Activated naive CD4-positive, alpha-beta T cell treated with anti-CD3 and anti-CD28 coated beads for 36 hours (primary cell): ENCODE measurements at regions of chr1 and their contacts with region 1.

Region 1: GRCh38 chr1:247390116-247390791 is 25.7 kb upstream of the NLRP3 start:
- DNase-seq: peak; percentile 91
- H3K4me3 Mint-ChIP-seq: no peak overlapping the region
- H3K27ac Mint-ChIP-seq: no peak overlapping the region
- H3K4me1 Mint-ChIP-seq: peaks cover 17% of the 10 kb centered on the region
- H3K27me3 Mint-ChIP-seq: peaks cover 7% of the 10 kb centered on the region

Region 2: DNA sequence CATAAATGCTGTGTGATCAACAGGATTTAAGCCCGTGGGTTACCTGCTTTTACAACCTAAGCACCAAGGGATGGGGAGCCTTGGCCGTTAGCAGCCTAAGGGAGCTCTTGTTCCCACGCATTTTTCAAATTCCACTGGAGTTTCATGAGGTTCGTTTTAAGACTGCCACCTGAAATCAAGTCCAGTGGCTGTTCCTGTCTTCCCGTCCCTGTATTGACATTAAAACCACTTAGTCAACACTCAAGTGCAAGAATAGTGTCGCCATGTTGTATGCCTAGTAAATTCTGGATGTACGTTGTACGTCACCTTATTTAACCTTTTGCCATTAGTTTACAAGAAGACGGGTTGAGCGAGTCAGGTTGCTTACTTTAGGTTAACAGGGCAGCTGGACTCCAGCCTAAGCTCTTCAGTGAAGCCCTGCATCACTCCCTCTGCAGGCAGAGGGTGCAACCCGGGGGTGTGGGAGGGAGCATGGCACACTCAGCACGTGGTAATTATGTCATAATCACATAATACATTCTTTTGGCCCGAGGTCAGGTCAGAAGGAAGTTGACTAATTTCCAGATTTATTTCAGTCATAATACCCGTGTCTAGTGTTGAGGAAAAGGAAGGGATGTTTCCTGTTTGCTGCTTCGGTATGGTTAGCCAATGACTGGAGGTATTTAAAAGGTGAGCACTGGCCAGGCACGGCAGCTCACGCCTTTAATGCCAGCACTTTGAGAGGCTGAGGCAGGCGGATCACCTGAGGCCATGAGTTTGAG is 781.5 kb before region 1 on chr1:
- CTCF ChIA-PET with region 1: no interaction called
- intact Hi-C with region 1: no loop called
- DNase-seq: peak; percentile 49
- H3K4me3 Mint-ChIP-seq: no peak overlapping the region
- H3K27ac Mint-ChIP-seq: peak overlapping the region; percentile 33
- H3K4me1 Mint-ChIP-seq: peaks cover 51% of the 10 kb centered on the region
- H3K27me3 Mint-ChIP-seq: no peaks in the 10 kb centered on the region

Region 3: GRCh38 chr1:246971090-246971721 is 419.0 kb before region 1 on chr1:
- CTCF ChIA-PET with region 1: no interaction called
- intact Hi-C with region 1: no loop called
- DNase-seq: peak; percentile 55
- H3K4me3 Mint-ChIP-seq: no peak overlapping the region
- H3K27ac Mint-ChIP-seq: no peak overlapping the region
- H3K4me1 Mint-ChIP-seq: no peaks in the 10 kb centered on the region
- H3K27me3 Mint-ChIP-seq: peaks cover 3% of the 10 kb centered on the region

Region 4: DNA sequence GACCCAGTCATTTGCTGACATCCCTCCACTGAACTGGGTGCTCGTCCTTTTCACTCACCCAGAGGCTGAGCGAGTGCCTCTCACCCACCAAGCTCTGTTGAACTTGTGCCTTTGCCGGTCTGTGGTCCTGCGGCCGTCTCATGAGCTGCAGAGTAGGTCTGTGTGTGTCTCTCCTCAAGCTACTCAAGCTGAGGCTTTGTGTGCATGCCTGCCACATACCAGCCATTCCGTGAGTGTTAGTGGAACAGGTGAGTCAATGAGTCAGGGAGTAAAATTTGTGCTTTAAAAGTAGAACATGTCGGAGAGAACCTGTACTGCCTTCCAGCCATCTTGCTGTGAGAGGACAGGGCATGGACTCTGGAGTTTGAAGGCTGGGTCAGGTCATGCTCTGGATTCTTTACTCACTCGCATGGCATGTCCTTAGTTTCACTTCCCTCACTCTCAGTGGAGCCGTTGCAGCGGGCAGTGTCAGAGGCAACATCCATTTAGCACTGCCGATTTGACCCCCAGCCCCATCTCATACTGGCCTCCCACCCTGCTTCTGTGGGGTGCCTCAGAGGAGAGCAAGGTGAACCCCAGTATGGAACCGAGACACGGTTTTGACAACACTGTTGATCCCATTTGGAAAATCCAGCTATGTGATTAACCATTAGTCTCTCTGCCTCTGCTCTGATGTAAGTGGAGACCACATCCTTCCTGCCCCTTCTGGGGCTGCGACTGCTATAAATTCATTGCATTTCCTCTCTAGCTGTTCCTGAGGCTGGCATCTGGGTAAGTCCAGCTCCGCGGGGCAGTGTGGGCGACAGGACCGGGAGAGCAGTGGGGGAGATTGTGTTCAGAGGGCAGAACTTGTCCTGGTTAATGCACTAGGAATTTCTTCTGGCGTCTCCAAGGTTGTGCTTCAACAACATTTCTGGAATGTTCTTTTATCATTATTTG is 25.4 kb after region 1 on chr1 and contains the start of gene NLRP3:
- CTCF ChIA-PET with region 1: interaction called, 25 read pairs
- intact Hi-C with region 1: loop called (anchors 1 kb)
- DNase-seq: peak; percentile 66
- H3K4me3 Mint-ChIP-seq: peak within 1 kb of the TSS; percentile 55
- H3K27ac Mint-ChIP-seq: peak within 1 kb of the TSS; percentile 3
- H3K4me1 Mint-ChIP-seq: peaks cover 50% of the 10 kb centered on the region
- H3K27me3 Mint-ChIP-seq: no peaks in the 10 kb centered on the region
- total RNA-seq, gene NLRP3: 0.20 TPM in 1 of 2 experiments, not detected in the other

Region 5: GRCh38 chr1:247487057-247487456 is 96.8 kb after region 1 on chr1:
- CTCF ChIA-PET with region 1: interaction called, 47 read pairs
- intact Hi-C with region 1: loop called (anchors 1 kb)
- DNase-seq: peak; percentile 37
- H3K4me3 Mint-ChIP-seq: no peak overlapping the region
- H3K27ac Mint-ChIP-seq: no peak overlapping the region
- H3K4me1 Mint-ChIP-seq: no peaks in the 10 kb centered on the region
- H3K27me3 Mint-ChIP-seq: peaks cover 5% of the 10 kb centered on the region

Region 6: GRCh38 chr1:247576495-247576894 is 186.2 kb after region 1 on chr1:
- CTCF ChIA-PET with region 1: interaction called, 3 read pairs
- intact Hi-C with region 1: loop called (anchors 1 kb)
- DNase-seq: no peak
- H3K4me3 Mint-ChIP-seq: no peak overlapping the region
- H3K27ac Mint-ChIP-seq: no peak overlapping the region
- H3K4me1 Mint-ChIP-seq: no peaks in the 10 kb centered on the region
- H3K27me3 Mint-ChIP-seq: peaks cover 17% of the 10 kb centered on the region